ENCODE measurements at regions of chr22 and their contacts with region 1.

Region 1: DNA sequence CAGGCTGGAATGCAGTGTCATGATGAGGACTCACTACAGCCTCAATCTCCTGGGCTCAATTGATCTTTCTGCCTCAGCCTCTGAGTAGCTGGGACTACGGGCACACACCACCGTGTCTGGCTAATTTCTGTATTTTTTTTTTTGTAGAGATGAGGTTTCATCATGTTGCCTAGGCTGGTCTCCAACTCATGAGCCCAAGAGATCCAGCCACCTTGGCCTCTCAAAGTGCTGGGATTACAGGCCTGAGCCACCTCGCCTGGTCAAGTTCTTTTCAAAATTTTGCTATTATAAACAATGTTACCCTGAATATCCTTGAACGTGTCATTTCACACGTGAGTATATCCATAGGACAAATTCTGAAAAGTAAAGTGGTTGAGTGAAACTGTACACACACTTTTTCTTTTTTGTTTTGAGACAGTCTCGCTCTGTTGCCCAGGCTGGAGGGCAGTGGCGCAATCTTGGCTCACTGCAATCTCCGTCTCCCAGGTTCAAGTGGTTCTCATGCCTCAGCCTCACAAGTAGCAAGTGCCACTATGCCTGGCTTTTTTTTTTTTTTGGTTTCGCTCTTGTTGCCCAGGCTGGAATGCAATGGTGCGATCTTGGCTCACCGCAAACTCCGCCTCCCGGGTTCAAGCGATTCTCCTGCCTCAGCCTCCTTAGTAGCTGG is 21.6 kb upstream of the EP300 start:
- DNase-seq: no peak
- H3K4me3 ChIP-seq: no peak overlapping the region
- H3K27ac ChIP-seq: peak overlapping the region; percentile 45
- H3K4me1 ChIP-seq: peaks cover 50% of the 10 kb centered on the region
- CTCF ChIP-seq: no peak

Region 2: GRCh38 chr22:41022470-41023298 is 48.1 kb before region 1 on chr22:
- CTCF ChIA-PET with region 1: no interaction called
- POLR2A ChIA-PET with region 1: no interaction called
- intact Hi-C with region 1: loop called (anchors 1 kb)
- DNase-seq: peak; percentile 92
- H3K4me3 ChIP-seq: peak overlapping the region; percentile 87
- H3K27ac ChIP-seq: peak overlapping the region; percentile 81
- H3K4me1 ChIP-seq: peaks cover 22% of the 10 kb centered on the region
- CTCF ChIP-seq: no peak

Region 3: DNA sequence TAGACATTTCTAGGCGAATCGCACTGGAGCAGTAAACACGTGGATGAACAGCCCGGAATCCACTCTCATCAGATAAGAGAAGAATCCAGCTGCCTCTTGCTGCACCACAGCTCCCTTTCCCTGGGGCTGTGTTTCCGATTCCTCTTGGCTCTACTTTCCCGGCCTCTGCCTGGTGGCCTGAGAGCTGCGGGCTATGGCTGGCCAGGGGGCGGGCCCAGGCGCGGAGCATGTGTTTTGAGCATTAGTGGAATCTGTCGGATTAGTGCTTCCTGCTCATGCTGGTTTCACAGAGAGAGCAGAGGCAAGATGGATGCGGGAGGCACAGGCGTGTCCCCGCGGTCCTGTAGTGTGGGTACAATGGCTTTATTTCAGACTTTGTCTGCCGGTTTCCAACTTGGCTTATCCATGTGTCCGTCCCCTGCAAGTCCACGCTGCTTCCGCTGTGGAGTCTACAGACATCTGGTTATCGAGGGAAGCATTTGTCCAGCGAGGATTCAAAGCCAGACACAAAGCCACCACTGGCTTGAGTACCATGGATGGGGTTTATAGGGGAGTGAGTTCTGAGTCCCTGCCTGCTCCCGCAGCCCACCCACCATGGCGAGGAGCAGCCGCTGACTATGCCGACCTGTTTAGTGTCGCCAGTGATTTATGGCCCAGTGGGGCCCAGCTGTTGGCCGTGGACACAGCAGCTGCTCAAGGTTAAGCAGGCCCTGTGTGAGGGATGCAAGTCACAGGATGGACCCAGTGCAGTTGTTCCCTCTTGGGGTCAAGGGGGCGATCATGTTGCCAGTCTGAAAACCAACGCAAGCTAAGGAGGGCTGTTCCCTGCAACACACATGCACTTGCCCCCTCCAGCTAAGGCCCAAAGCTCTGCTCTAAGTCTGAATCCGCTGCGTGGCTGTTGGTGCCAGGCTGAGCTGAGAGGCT is 21.7 kb before region 1 on chr22:
- CTCF ChIA-PET with region 1: no interaction called
- POLR2A ChIA-PET with region 1: no interaction called
- intact Hi-C with region 1: no loop called
- DNase-seq: no peak
- H3K4me3 ChIP-seq: no peak overlapping the region
- H3K27ac ChIP-seq: no peak overlapping the region
- H3K4me1 ChIP-seq: no peaks in the 10 kb centered on the region
- CTCF ChIP-seq: no peak